ENCODE measurements at regions of chr7 and their contacts with region 1.

Region 1: GRCh38 chr7:44858161-44858560 is 10.3 kb upstream of the H2AZ2 start:
- DNase-seq: no peak
- ATAC-seq: no peak
- H3K4me3 ChIP-seq: no peak overlapping the region
- H3K4me3 Mint-ChIP-seq: no peak overlapping the region
- H3K27ac ChIP-seq: no peak overlapping the region
- H3K27ac Mint-ChIP-seq: no peak overlapping the region
- H3K4me1 ChIP-seq: no peaks in the 10 kb centered on the region
- H3K4me1 Mint-ChIP-seq: peaks cover 5% of the 10 kb centered on the region
- H3K27me3 ChIP-seq: no peaks in the 10 kb centered on the region
- H3K27me3 Mint-ChIP-seq: no peaks in the 10 kb centered on the region
- CTCF ChIP-seq: peak; percentile 25

Region 2: GRCh38 chr7:44587843-44588711 is 270.1 kb before region 1 on chr7:
- CTCF ChIA-PET with region 1: interaction called, 10 read pairs
- POLR2A ChIA-PET with region 1: interaction called, 3 read pairs
- intact Hi-C with region 1: loop called in 1 of 2 experiments (anchors 1 kb)
- DNase-seq: peak; percentile 34 to 79 (median 63)
- ATAC-seq: peak; percentile 81
- H3K4me3 ChIP-seq: no peak overlapping the region
- H3K4me3 Mint-ChIP-seq: no peak overlapping the region
- H3K27ac ChIP-seq: no peak overlapping the region
- H3K27ac Mint-ChIP-seq: no peak overlapping the region
- H3K4me1 ChIP-seq: no peaks in the 10 kb centered on the region
- H3K4me1 Mint-ChIP-seq: peaks cover 6% of the 10 kb centered on the region
- H3K27me3 ChIP-seq: no peaks in the 10 kb centered on the region
- H3K27me3 Mint-ChIP-seq: no peaks in the 10 kb centered on the region
- CTCF ChIP-seq: peak; percentile 68

Region 3: DNA sequence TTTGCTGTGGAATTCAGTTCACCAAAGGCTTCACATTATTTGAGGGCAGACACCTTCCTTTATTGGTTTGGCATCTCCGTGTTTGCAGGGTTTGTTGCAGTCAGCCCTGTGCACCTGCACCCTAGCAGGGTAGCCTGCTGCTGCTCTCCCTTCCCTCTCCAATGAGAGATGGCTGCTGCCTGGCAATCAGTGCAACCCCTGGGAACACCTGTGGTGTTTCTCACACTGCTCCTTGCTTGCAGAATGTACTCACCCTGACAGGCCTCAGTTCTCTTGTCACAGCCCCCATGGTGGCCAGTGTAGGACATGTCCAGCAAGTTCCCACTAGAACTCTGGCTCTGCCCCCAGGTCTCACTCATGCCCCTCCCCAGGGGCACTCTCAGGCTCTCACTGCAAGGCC is 73.8 kb before region 1 on chr7:
- CTCF ChIA-PET with region 1: no interaction called
- POLR2A ChIA-PET with region 1: no interaction called
- intact Hi-C with region 1: no loop called
- DNase-seq: no peak
- ATAC-seq: no peak
- H3K4me3 ChIP-seq: no peak overlapping the region
- H3K4me3 Mint-ChIP-seq: no peak overlapping the region
- H3K27ac ChIP-seq: no peak overlapping the region
- H3K27ac Mint-ChIP-seq: no peak overlapping the region
- H3K4me1 ChIP-seq: no peaks in the 10 kb centered on the region
- H3K4me1 Mint-ChIP-seq: no peaks in the 10 kb centered on the region
- H3K27me3 ChIP-seq: no peaks in the 10 kb centered on the region
- H3K27me3 Mint-ChIP-seq: no peaks in the 10 kb centered on the region
- CTCF ChIP-seq: no peak

Region 4: DNA sequence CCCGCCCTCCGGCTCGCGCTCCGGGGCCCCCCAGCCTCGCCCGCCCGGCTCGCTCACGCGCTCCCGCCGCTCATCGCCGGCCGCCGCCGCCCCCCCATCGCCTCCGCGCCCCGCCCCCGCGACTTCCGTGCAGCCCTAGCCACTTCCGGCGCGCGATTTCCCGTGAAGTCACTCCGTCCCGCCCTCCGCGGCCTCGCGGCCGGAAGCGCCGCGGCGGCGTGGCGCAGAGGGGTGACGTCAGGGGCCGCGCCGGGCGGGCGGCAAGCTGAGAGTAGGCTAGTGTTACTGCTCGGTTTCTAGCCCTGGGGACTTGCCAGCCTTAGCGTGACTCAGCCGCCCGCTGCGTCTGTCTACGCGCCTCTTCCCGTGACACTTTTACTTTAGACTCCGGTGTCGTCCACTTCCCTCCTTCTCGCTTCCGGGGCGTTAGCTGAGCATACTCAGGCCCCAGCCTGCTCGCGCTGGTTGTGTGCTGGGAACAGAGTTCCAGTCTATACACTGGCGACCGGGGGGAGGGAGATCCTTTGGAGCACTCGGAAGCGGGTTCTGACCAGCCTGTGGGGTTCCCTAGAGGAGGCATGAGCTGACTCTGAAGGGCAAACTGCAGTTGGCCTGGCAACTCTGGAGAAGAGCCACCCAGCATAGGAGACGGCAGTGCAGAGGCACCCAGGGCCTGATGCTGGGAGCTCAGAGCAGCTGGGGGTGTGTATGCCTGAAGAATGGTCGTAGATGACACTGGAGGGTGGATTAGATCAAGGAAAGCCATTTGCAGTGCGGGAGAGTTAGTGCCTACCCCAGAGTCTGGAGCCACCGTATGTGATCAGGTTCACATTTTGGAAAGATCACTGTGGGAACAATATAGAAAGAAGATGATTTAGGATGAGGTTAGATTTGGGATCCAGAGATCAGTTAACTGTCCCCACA is 27.5 kb after region 1 on chr7 and contains the start of gene PURB:
- CTCF ChIA-PET with region 1: interaction called, 43 read pairs
- POLR2A ChIA-PET with region 1: interaction called, 5 read pairs
- intact Hi-C with region 1: loop called (anchors 2 kb)
- DNase-seq: peak; percentile 94 to 99 (median 97)
- ATAC-seq: peak; percentile 86
- H3K4me3 ChIP-seq: peak within 1 kb of the TSS; percentile 64 to 67
- H3K4me3 Mint-ChIP-seq: peak within 1 kb of the TSS; percentile 92
- H3K27ac ChIP-seq: peak within 1 kb of the TSS; percentile 98 to 100
- H3K27ac Mint-ChIP-seq: peak within 1 kb of the TSS; percentile 99
- H3K4me1 ChIP-seq: peaks cover 36% of the 10 kb centered on the region
- H3K4me1 Mint-ChIP-seq: peaks cover 45% of the 10 kb centered on the region
- H3K27me3 ChIP-seq: no peaks in the 10 kb centered on the region
- H3K27me3 Mint-ChIP-seq: no peaks in the 10 kb centered on the region
- CTCF ChIP-seq: no peak
- total RNA-seq, gene PURB: 16.3 to 16.5 TPM

Region 5: GRCh38 chr7:44905002-44905635 is 47.0 kb after region 1 on chr7:
- CTCF ChIA-PET with region 1: interaction called, 10 read pairs
- POLR2A ChIA-PET with region 1: interaction called, 7 read pairs
- intact Hi-C with region 1: no loop called
- DNase-seq: no peak
- ATAC-seq: no peak
- H3K4me3 ChIP-seq: no peak overlapping the region
- H3K4me3 Mint-ChIP-seq: no peak overlapping the region
- H3K27ac ChIP-seq: no peak overlapping the region
- H3K27ac Mint-ChIP-seq: no peak overlapping the region
- H3K4me1 ChIP-seq: no peaks in the 10 kb centered on the region
- H3K4me1 Mint-ChIP-seq: no peaks in the 10 kb centered on the region
- H3K27me3 ChIP-seq: no peaks in the 10 kb centered on the region
- H3K27me3 Mint-ChIP-seq: no peaks in the 10 kb centered on the region
- CTCF ChIP-seq: no peak

Region 6: GRCh38 chr7:44921607-44922359 is 63.6 kb after region 1 on chr7:
- CTCF ChIA-PET with region 1: interaction called, 191 read pairs
- POLR2A ChIA-PET with region 1: interaction called, 5 read pairs
- intact Hi-C with region 1: loop called (anchors 1 kb)
- DNase-seq: peak; percentile 88 to 99 (median 92)
- ATAC-seq: peak; percentile 94
- H3K4me3 ChIP-seq: no peak overlapping the region
- H3K4me3 Mint-ChIP-seq: no peak overlapping the region
- H3K27ac ChIP-seq: no peak overlapping the region
- H3K27ac Mint-ChIP-seq: no peak overlapping the region
- H3K4me1 ChIP-seq: no peaks in the 10 kb centered on the region
- H3K4me1 Mint-ChIP-seq: peaks cover 5% of the 10 kb centered on the region
- H3K27me3 ChIP-seq: peaks cover 0 to 2% of the 10 kb centered on the region in 2 experiments
- H3K27me3 Mint-ChIP-seq: peaks cover under 1% of the 10 kb centered on the region
- CTCF ChIP-seq: peak; percentile 87